A673 (cell line): ENCODE measurements at regions of chr5 and their contacts with region 1.

Region 1: GRCh38 chr5:180095545-180095944 is 24.0 kb upstream of the RNF130 start:
- DNase-seq: no peak
- H3K4me3 ChIP-seq: no peak overlapping the region
- H3K27ac ChIP-seq: no peak overlapping the region
- H3K4me1 ChIP-seq: no peaks in the 10 kb centered on the region
- H3K27me3 ChIP-seq: no peaks in the 10 kb centered on the region
- CTCF ChIP-seq: no peak

Region 2: DNA sequence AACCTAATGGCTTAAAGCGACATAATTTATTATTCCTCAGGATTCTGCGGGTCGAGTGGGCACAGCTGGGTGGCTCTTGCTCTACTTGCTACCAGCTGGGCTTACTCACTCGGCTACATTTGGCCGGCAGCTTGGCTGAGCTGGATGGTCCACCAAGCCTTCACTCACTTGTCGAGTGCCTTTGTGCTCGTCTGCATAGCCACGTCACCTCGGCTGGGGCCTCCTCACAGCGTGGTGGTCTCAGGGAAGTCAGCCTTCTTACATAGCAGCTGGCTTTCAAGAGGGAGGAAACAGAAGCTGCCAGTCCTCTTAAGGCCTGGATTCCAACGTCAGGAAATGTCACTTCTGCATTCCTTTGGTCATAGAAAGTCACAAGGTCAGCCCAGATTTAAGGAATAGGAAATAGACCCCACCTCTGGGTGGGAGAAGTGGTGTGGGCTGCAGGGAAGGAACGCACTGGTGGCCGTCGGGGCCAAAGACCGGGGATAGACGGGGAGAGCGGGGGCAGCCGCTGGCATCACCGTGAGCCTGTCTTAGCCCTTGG is 620.3 kb before region 1 on chr5:
- CTCF ChIA-PET with region 1: no interaction called
- POLR2A ChIA-PET with region 1: interaction called, 18 read pairs
- intact Hi-C with region 1: no loop called
- DNase-seq: peak; percentile 7
- H3K4me3 ChIP-seq: no peak overlapping the region
- H3K27ac ChIP-seq: no peak overlapping the region
- H3K4me1 ChIP-seq: peaks cover 5% of the 10 kb centered on the region
- H3K27me3 ChIP-seq: no peaks in the 10 kb centered on the region
- CTCF ChIP-seq: no peak